Esophagus squamous epithelium (tissue), 5 donors: ENCODE measurements at regions of chr4 and their contacts with region 1.

Region 1: GRCh38 chr4:78864405-78865024 is 74.7 kb downstream of the PAQR3 start:
- DNase-seq: no peak
- H3K4me3 ChIP-seq: no peak overlapping the region
- H3K27ac ChIP-seq: no peak overlapping the region
- H3K4me1 ChIP-seq: no peaks in the 10 kb centered on the region
- H3K27me3 ChIP-seq: no peaks in the 10 kb centered on the region
- CTCF ChIP-seq: peak; percentile 62 to 80 (median 78)
- POLR2A ChIP-seq: no peak

Region 2: GRCh38 chr4:78612398-78613178 is 251.9 kb before region 1 on chr4:
- intact Hi-C with region 1: loop called (anchors 5 kb)
- DNase-seq: peak; percentile 0
- H3K4me3 ChIP-seq: no peak overlapping the region
- H3K27ac ChIP-seq: no peak overlapping the region
- H3K4me1 ChIP-seq: peaks cover 0 to 11% (median 0%) of the 10 kb centered on the region in 3 donors
- H3K27me3 ChIP-seq: no peaks in the 10 kb centered on the region
- CTCF ChIP-seq: peak; percentile 32 to 84 (median 73)
- POLR2A ChIP-seq: no peak